T-cell (primary cell): ENCODE measurements at regions of chr14 and their contacts with region 1.

Region 1: DNA sequence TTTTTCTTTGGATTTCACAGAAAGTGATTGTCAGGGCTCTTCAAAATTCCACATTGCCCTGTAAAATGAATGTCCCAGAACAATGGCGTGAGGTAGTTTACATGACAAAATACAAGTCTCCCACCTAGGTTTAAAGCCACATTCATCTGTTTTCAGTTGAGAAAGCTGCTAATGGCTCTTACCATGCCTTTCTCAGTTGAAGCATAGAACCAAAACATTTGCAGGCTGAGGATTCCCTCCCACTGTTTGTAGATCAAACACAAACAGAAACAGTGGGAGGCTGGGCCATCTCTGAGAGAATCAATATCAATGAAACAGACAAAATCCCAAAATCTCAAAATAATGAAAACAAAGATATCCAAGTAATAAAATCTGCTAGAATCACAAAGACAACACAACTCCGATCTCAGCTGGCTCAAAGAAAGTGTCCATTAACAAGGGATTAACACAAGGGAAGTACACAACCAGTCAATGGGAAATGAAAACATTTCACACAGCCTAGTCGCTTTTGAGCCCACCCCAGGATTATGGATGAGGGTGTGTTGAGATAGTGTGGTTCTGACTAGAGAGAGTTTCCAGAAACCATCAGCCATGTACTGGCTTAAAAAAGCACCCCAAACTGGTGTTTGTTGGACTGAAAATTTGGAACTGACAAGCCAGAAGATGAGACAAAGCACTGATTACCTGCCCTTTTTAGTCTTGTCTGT is 54.5 kb upstream of the TMEM260 start:
- DNase-seq: no peak
- ATAC-seq: no peak
- H3K4me3 ChIP-seq: no peak overlapping the region
- H3K4me3 Mint-ChIP-seq: no peak overlapping the region
- H3K27ac ChIP-seq: no peak overlapping the region
- H3K27ac Mint-ChIP-seq: no peak overlapping the region
- H3K4me1 ChIP-seq: no peaks in the 10 kb centered on the region
- H3K4me1 Mint-ChIP-seq: no peaks in the 10 kb centered on the region
- H3K27me3 ChIP-seq: no peaks in the 10 kb centered on the region
- H3K27me3 Mint-ChIP-seq: peaks cover 23 to 36% of the 10 kb centered on the region in 2 donors

Region 2: GRCh38 chr14:56065621-56066290 is 459.4 kb before region 1 on chr14:
- CTCF ChIA-PET with region 1: no interaction called
- POLR2A ChIA-PET with region 1: interaction called in 1 of 2 experiments, 10 read pairs
- DNase-seq: no peak
- ATAC-seq: no peak
- H3K4me3 ChIP-seq: no peak overlapping the region
- H3K4me3 Mint-ChIP-seq: no peak overlapping the region
- H3K27ac ChIP-seq: no peak overlapping the region
- H3K27ac Mint-ChIP-seq: no peak overlapping the region
- H3K4me1 ChIP-seq: no peaks in the 10 kb centered on the region
- H3K4me1 Mint-ChIP-seq: no peaks in the 10 kb centered on the region
- H3K27me3 ChIP-seq: peaks cover 0 to 3% of the 10 kb centered on the region in 2 experiments
- H3K27me3 Mint-ChIP-seq: peaks cover 3 to 4% of the 10 kb centered on the region in 2 donors